ENCODE measurements at regions of chr7 and their contacts with region 1.

Region 1: DNA sequence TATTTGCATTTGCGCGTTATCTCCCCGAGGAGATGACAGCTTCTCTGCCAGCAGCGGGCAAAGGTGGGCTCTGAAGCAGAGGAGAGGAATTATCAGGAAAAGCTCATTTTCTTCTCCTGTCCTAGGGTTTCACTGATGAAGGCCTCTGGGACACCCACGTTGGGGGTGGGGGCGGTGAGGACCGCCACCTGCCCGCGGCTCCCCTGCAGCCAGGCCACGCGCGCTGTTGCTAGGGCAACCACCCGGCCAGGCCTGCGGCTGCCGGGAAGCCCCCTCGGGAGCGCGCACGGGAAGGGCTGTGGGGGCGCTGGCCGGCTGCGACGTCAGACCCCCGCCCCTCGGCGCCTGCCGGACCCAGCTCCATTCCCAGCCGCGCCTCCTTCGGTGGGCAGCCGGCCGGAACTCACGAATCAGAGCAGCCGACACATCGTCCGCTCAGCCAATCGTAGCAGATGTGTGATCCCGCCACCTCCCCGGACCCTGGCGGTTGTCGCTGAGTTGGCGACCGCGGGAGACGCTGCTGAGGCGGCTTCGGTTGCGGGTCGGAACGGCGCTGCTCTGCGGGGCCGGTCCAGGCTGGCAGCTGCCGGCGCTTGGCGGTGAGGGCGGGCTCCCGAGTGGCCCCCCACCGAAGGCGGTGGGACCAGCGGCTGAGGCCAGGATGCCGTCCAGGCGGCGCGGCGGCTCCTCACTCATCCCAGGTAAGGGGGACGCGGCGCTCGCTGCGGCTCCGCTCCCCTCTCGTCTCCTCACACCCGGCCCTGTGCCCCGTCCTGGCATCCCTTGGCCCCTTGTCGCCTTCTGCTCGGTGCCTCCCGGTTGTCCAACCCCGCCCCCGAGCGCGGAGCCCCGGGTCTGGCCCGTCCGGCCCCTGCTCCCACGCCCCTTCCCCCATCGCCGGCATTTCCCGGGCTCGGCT is at the start of gene TPST1:
- DNase-seq: peak; percentile 94
- H3K4me3 ChIP-seq: peak within 1 kb of the TSS; percentile 74 to 97 (median 92)
- H3K27ac ChIP-seq: peak within 1 kb of the TSS; percentile 62 to 83 (median 77)
- H3K4me1 ChIP-seq: peaks cover 6 to 37% (median 28%) of the 10 kb centered on the region in 4 donors
- H3K27me3 ChIP-seq: no peaks in the 10 kb centered on the region
- CTCF ChIP-seq: peak; percentile 29 to 65 (median 41)
- EP300 ChIP-seq: no peak
- POLR2A ChIP-seq: peak; percentile 76
- total RNA-seq, gene TPST1: 9.6 to 22.4 (median 14.4) TPM

Region 2: GRCh38 chr7:66140924-66141323 is 64.2 kb before region 1 on chr7:
- intact Hi-C with region 1: loop called (anchors 2 kb)
- DNase-seq: no peak
- H3K4me3 ChIP-seq: no peak overlapping the region
- H3K27ac ChIP-seq: peak overlapping the region; percentile 65 to 77 (median 71)
- H3K4me1 ChIP-seq: peaks cover 35 to 66% (median 58%) of the 10 kb centered on the region in 4 donors
- H3K27me3 ChIP-seq: no peaks in the 10 kb centered on the region
- CTCF ChIP-seq: peak; percentile 54 to 66 (median 62)
- EP300 ChIP-seq: no peak
- POLR2A ChIP-seq: no peak

Region 3: DNA sequence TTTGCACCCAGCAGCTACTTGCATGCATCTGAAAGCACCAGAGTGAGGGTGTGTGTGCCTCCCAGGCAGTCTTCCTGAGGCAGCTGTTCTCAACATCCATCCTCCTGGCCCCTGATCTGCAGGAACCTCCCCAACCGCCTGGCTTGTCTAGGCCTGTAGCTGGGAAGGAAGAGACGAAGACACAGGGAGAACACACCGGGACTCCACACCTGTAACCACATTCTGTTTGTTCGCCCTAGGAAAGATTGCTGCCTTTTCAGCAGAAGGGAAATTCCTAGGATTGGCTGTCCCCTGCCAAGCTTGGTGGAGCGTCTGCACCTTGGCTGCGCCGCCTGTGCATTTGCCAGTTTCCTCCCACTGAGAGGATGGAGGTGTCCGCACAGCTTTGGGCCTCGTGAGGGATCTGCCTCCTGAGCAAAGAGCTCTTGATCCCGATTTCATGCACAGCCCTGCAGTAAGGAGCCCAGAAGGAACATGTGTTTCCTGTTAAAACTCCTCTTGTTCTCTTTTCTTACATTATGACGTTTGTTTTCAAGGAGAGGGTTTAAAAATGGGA is 154.7 kb after region 1 on chr7:
- intact Hi-C with region 1: no loop called
- DNase-seq: no peak
- H3K4me3 ChIP-seq: no peak overlapping the region
- H3K27ac ChIP-seq: no peak overlapping the region
- H3K4me1 ChIP-seq: peaks cover 0 to 4% (median 0%) of the 10 kb centered on the region in 4 donors
- H3K27me3 ChIP-seq: no peaks in the 10 kb centered on the region
- CTCF ChIP-seq: no peak
- EP300 ChIP-seq: no peak
- POLR2A ChIP-seq: no peak

Region 4: DNA sequence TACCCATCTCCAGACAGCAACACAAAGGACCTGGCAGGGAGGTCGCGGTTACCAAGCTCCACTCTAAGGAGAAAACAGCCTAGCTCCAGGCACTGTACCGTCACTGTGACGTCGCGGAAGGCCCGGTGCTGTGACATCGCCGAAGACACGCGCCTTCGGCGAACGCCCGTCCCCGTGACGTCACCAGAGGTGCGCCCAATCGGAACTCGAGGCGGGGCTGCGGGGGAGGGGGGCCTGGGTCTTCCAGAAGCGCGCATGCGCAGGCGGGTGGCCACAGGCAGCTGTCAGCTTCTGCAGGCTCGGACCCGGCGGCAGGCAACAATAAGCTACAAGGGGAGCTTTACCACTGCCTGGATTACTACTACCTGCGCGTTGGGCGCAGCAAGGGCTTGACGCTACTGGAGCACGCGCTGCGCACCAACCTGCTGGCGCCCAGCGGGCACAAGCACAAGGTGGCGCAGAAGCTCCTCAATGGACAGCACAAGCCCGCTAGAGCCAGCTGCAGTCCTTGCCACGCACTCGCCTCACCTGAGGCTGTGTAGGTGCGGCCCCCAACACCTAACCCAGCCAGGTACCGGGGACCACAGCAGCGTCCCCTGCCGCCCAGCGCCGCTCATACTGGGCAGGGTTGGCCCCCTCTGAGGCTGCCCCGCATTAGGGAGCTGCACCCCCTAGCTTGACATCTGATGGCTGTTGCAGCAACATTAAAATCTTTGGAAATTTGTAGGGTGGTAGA is 208.5 kb after region 1 on chr7:
- intact Hi-C with region 1: loop called (anchors 10 kb)
- DNase-seq: peak; percentile 92
- H3K4me3 ChIP-seq: peak overlapping the region; percentile 55 to 69 (median 59)
- H3K27ac ChIP-seq: peak overlapping the region in 1 of 4 donors; percentile 22
- H3K4me1 ChIP-seq: peaks cover 12 to 15% (median 13%) of the 10 kb centered on the region in 4 donors
- H3K27me3 ChIP-seq: no peaks in the 10 kb centered on the region
- CTCF ChIP-seq: peak in 2 of 3 experiments; percentile 27 to 41
- EP300 ChIP-seq: peak; percentile 39
- POLR2A ChIP-seq: no peak

Measured in esophagus muscularis mucosa (tissue), 4 donors.